B cell (primary cell): ENCODE measurements at regions of chr19 and their contacts with region 1.

Region 1: GRCh38 chr19:41397086-41398049 is at the starts of genes BCKDHA and EXOSC5:
- DNase-seq: peak; percentile 100
- ATAC-seq: peak; percentile 98
- H3K4me3 ChIP-seq: peak within 1 kb of the TSS; percentile 84 to 100 (median 90)
- H3K4me3 Mint-ChIP-seq: peak within 1 kb of the TSS; percentile 96
- H3K27ac ChIP-seq: peak within 1 kb of the TSS; percentile 94 to 96
- H3K27ac Mint-ChIP-seq: peak within 1 kb of the TSS; percentile 99
- H3K4me1 ChIP-seq: peaks cover 27 to 28% of the 10 kb centered on the region in 2 donors
- H3K4me1 Mint-ChIP-seq: peaks cover 45% of the 10 kb centered on the region
- H3K27me3 ChIP-seq: no peaks in the 10 kb centered on the region
- H3K27me3 Mint-ChIP-seq: no peaks in the 10 kb centered on the region
- CTCF ChIP-seq: no peak
- total RNA-seq, gene BCKDHA: 20.6 and 25.2 TPM in 2 replicates
- total RNA-seq, gene EXOSC5: 14.1 and 16.1 TPM in 2 replicates

Region 2: GRCh38 chr19:41327576-41328156 is 69.7 kb before region 1 on chr19:
- CTCF ChIA-PET with region 1: no interaction called
- POLR2A ChIA-PET with region 1: no interaction called
- intact Hi-C with region 1: loop called (anchors 1 kb)
- DNase-seq: peak; percentile 90
- ATAC-seq: peak; percentile 78
- H3K4me3 ChIP-seq: peak overlapping the region; percentile 8 to 72 (median 39)
- H3K4me3 Mint-ChIP-seq: peak overlapping the region; percentile 88
- H3K27ac ChIP-seq: peak overlapping the region; percentile 76 to 97
- H3K27ac Mint-ChIP-seq: peak overlapping the region; percentile 98
- H3K4me1 ChIP-seq: peaks cover 59 to 80% of the 10 kb centered on the region in 2 donors
- H3K4me1 Mint-ChIP-seq: peaks cover 72% of the 10 kb centered on the region
- H3K27me3 ChIP-seq: no peaks in the 10 kb centered on the region
- H3K27me3 Mint-ChIP-seq: no peaks in the 10 kb centered on the region
- CTCF ChIP-seq: no peak

Region 3: DNA sequence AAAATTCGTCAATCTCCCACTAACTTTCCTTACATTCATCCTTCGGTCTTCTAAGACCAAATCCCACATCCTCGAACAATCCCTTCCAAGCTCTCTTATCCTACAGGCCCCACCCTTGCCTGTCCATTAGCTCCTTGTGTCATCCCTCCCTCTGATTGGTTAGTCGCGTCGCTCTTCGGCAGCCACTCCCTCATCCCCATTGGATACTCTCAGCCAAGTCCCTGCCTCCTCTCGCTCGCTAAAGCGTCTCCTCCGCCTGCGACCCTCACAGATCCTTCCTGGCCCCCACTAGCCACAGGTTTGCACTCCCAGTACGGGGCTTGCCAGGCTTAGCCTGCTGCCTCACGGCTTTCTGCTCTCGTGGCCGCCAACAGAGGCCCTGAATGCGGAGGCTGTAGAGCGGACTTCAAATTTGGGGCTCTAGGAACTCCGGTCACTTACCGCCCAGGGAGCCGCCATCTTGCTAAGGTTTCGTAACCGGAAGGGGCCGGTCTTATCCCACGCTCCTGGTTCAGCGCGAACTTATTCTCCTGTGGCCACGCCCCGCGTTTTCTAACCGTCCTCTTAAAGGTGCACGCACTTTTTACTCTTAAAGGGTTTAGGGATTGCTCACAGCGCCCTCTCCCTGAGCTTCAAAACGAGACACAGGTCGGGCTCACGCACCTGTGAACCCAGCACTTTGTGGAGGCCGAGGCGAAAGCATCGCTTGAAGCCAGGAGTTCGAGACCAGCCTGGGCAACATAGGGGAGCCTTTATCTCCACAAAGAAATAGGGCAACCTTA is 42.3 kb after region 1 on chr19 and contains the start of gene DMAC2:
- CTCF ChIA-PET with region 1: no interaction called
- POLR2A ChIA-PET with region 1: no interaction called
- intact Hi-C with region 1: loop called (anchors 1 kb)
- DNase-seq: peak; percentile 94
- ATAC-seq: peak; percentile 98
- H3K4me3 ChIP-seq: peak within 1 kb of the TSS; percentile 61 to 97 (median 81)
- H3K4me3 Mint-ChIP-seq: peak within 1 kb of the TSS; percentile 45
- H3K27ac ChIP-seq: peak within 1 kb of the TSS; percentile 51 to 80
- H3K27ac Mint-ChIP-seq: peak within 1 kb of the TSS; percentile 50
- H3K4me1 ChIP-seq: peaks cover 8 to 14% of the 10 kb centered on the region in 2 donors
- H3K4me1 Mint-ChIP-seq: peaks cover 15% of the 10 kb centered on the region
- H3K27me3 ChIP-seq: peaks cover 0 to 4% (median 0%) of the 10 kb centered on the region in 4 experiments
- H3K27me3 Mint-ChIP-seq: peaks cover 13% of the 10 kb centered on the region
- CTCF ChIP-seq: peak; percentile 41
- total RNA-seq, gene DMAC2: 31.6 and 31.8 TPM in 2 replicates